ENCODE measurements at regions of chr1 and their contacts with region 1.

Region 1: GRCh38 chr1:92858564-92859399 is 26.9 kb downstream of the RPL5 start:
- DNase-seq: peak; percentile 57
- H3K4me3 Mint-ChIP-seq: peak overlapping the region; percentile 46
- H3K27ac Mint-ChIP-seq: peak overlapping the region; percentile 64
- H3K4me1 Mint-ChIP-seq: peaks cover 24% of the 10 kb centered on the region
- H3K27me3 Mint-ChIP-seq: no peaks in the 10 kb centered on the region

Region 2: GRCh38 chr1:92804721-92805169 is 54.0 kb before region 1 on chr1:
- intact Hi-C with region 1: no loop called
- DNase-seq: no peak
- H3K4me3 Mint-ChIP-seq: no peak overlapping the region
- H3K27ac Mint-ChIP-seq: no peak overlapping the region
- H3K4me1 Mint-ChIP-seq: no peaks in the 10 kb centered on the region
- H3K27me3 Mint-ChIP-seq: peaks cover 25% of the 10 kb centered on the region

Region 3: GRCh38 chr1:92831762-92832536 is 26.8 kb before region 1 on chr1 and contains the start of gene RPL5:
- intact Hi-C with region 1: loop called (anchors 1 kb)
- DNase-seq: peak; percentile 96
- H3K4me3 Mint-ChIP-seq: peak within 1 kb of the TSS; percentile 96
- H3K27ac Mint-ChIP-seq: peak within 1 kb of the TSS; percentile 97
- H3K4me1 Mint-ChIP-seq: peaks cover 35% of the 10 kb centered on the region
- H3K27me3 Mint-ChIP-seq: peaks cover 2% of the 10 kb centered on the region
- total RNA-seq, gene RPL5: 1,115 and 1,120 TPM in 2 replicates

Region 4: GRCh38 chr1:92980732-92981647 is 122.2 kb after region 1 on chr1:
- intact Hi-C with region 1: loop called (anchors 1 kb)
- DNase-seq: peak; percentile 55
- H3K4me3 Mint-ChIP-seq: peak overlapping the region; percentile 60
- H3K27ac Mint-ChIP-seq: peak overlapping the region; percentile 97
- H3K4me1 Mint-ChIP-seq: peaks cover 67% of the 10 kb centered on the region
- H3K27me3 Mint-ChIP-seq: no peaks in the 10 kb centered on the region

Region 5: DNA sequence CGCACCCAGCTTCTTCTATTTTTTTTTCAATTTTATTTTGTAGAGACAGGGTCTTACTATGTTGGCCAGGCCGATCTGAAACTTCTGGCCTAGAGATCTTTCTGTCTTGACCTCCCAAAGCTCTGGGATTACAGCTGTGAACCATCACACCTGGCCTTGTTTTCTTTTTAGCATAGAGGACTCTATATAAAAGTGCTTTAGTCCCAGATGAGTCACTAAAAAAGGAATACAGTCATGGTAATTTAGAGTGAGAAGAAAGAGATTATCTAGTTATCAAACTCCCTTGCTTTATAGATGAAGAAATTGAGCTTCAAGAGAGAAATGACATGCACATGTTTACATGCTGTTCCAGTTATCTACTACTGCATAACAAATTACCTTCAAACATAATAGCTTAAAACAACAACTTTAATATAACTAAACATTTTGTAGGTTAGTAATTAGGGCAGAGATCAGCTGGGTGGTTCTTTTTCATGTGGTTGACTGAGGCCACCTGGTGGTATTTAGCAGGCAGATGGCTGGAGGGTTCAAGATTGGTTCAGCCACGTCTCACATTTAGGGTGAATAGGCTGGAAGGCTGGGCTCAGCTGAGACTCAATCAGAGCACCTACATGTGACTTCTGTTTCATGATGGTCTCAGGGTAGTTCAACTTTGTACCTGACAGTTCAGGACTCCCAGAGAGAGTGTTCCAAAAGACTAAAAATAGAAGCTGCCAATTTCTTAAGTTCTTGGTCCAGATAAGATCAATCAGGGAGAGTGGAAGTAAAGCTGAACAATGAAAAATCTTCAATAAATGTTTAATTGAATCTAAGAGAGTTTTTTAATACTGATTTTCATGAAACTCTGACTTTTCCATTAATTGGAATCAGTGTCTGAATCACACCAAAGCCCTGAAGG is 203.4 kb after region 1 on chr1:
- intact Hi-C with region 1: loop called (anchors 5 kb)
- DNase-seq: peak; percentile 14
- H3K4me3 Mint-ChIP-seq: no peak overlapping the region
- H3K27ac Mint-ChIP-seq: no peak overlapping the region
- H3K4me1 Mint-ChIP-seq: no peaks in the 10 kb centered on the region
- H3K27me3 Mint-ChIP-seq: peaks cover 34% of the 10 kb centered on the region